SK-N-SH (cell line): ENCODE measurements at regions of chr12 and their contacts with region 1.

Region 1: GRCh38 chr12:69157023-69157655 is 82.2 kb upstream of the CPSF6 start:
- DNase-seq: peak; percentile 81
- H3K4me3 ChIP-seq: peak overlapping the region; percentile 1 to 23; a peak in 3 of 4 replicates
- H3K27ac ChIP-seq: no peak overlapping the region
- H3K4me1 ChIP-seq: no peaks in the 10 kb centered on the region; a peak in 2 of 4 replicates
- H3K27me3 ChIP-seq: no peaks in the 10 kb centered on the region
- CTCF ChIP-seq: peak; percentile 92
- EP300 ChIP-seq: no peak
- RAD21 ChIP-seq: peak; percentile 63

Region 2: GRCh38 chr12:69173368-69173767 is 16.2 kb after region 1 on chr12:
- CTCF ChIA-PET with region 1: interaction called, 18 read pairs
- POLR2A ChIA-PET with region 1: no interaction called
- DNase-seq: no peak
- H3K4me3 ChIP-seq: no peak overlapping the region
- H3K27ac ChIP-seq: no peak overlapping the region
- H3K4me1 ChIP-seq: peaks cover 0 to 3% of the 10 kb centered on the region in 2 experiments; a peak in 1 of 4 replicates
- H3K27me3 ChIP-seq: no peaks in the 10 kb centered on the region
- CTCF ChIP-seq: no peak
- EP300 ChIP-seq: no peak
- RAD21 ChIP-seq: no peak

Region 3: GRCh38 chr12:69254046-69254445 is 96.9 kb after region 1 on chr12:
- CTCF ChIA-PET with region 1: interaction called, 29 read pairs
- POLR2A ChIA-PET with region 1: no interaction called
- DNase-seq: peak; percentile 42
- H3K4me3 ChIP-seq: no peak overlapping the region
- H3K27ac ChIP-seq: no peak overlapping the region
- H3K4me1 ChIP-seq: no peaks in the 10 kb centered on the region; a peak in 3 of 4 replicates
- H3K27me3 ChIP-seq: no peaks in the 10 kb centered on the region
- CTCF ChIP-seq: peak; percentile 79
- EP300 ChIP-seq: no peak
- RAD21 ChIP-seq: peak; percentile 67

Region 4: DNA sequence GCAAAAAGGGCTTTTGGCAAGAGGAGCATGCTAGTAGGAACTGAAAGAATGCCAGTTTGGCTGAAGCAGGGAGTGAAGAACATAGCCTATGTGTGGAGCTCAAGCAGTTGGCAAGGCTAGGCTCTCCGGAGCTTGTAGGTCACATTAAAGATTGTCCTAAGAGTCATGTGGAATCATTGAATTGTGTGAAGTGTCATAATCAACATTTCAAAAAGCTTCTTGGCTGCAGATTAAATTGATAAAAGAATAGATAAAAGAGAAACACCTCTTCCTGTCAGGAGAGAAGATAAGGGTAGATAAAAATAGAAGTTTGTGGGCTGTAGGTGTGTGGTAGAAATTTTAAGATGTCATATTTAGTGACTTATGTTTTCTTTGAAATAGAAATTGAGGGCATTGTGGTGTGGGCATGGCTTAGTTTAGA is 118.3 kb after region 1 on chr12:
- CTCF ChIA-PET with region 1: interaction called, 10 read pairs
- POLR2A ChIA-PET with region 1: no interaction called
- DNase-seq: no peak
- H3K4me3 ChIP-seq: no peak overlapping the region
- H3K27ac ChIP-seq: no peak overlapping the region
- H3K4me1 ChIP-seq: no peaks in the 10 kb centered on the region
- H3K27me3 ChIP-seq: no peaks in the 10 kb centered on the region
- CTCF ChIP-seq: no peak
- EP300 ChIP-seq: no peak
- RAD21 ChIP-seq: no peak

Region 5: GRCh38 chr12:69359531-69360347 is 202.6 kb after region 1 on chr12 and contains the start of gene YEATS4:
- CTCF ChIA-PET with region 1: interaction called, 11 read pairs
- POLR2A ChIA-PET with region 1: no interaction called
- DNase-seq: peak; percentile 92
- H3K4me3 ChIP-seq: peak within 1 kb of the TSS; percentile 83 to 90
- H3K27ac ChIP-seq: peak within 1 kb of the TSS; percentile 93
- H3K4me1 ChIP-seq: peaks cover 4 to 6% of the 10 kb centered on the region in 2 experiments; a peak in 3 of 4 replicates
- H3K27me3 ChIP-seq: no peaks in the 10 kb centered on the region
- CTCF ChIP-seq: no peak
- EP300 ChIP-seq: no peak
- RAD21 ChIP-seq: no peak
- polyA plus RNA-seq, gene YEATS4: 11.4 and 13.2 TPM in 2 replicates